ENCODE measurements at regions of chr15 and their contacts with region 1.

Region 1: GRCh38 chr15:85689729-85690128 is 105.0 kb downstream of the KLHL25 start:
- DNase-seq: peak; percentile 56
- H3K4me3 Mint-ChIP-seq: peak overlapping the region; percentile 96
- H3K27ac Mint-ChIP-seq: peak overlapping the region; percentile 100
- H3K4me1 Mint-ChIP-seq: peaks cover 73% of the 10 kb centered on the region
- H3K27me3 Mint-ChIP-seq: no peaks in the 10 kb centered on the region

Region 2: DNA sequence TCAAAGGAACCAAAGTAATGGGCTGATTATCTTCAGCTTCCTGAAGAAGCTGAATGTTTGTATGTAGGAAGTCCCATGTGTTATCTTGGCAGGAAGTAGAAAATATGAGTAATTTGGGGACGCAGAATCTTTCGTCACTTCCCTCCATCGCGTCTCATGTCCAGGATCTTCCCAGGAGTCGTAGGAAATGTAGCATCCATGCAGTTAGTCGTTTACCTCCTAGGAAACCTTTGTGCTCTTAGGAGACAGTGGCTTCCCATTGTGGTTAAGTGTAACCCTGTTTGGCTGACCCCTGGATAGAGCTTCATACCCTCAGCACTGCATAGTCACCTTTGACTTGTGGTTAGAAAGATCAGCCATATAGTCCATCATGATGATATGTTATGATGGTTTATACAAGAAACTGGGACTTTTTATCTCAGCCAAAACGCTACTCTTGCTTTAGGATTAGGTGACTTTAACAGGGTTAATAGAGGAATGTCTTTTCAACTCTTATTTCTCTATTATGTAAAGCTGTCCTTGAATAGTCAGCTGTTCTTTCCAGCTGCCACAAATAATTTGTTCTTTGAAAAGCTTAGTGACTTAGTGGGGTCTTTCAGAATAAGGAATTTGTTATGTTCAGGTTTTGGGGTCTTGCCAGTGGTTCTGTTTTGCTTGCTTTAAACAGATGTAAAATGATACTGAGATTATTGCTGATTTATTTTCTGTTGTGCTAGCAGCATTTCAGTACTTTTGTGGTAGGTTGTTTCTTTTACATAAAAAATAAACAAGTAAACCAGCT is 12.8 kb after region 1 on chr15:
- intact Hi-C with region 1: loop called (anchors 1 kb)
- DNase-seq: peak; percentile 29
- H3K4me3 Mint-ChIP-seq: peak overlapping the region; percentile 78
- H3K27ac Mint-ChIP-seq: peak overlapping the region; percentile 98
- H3K4me1 Mint-ChIP-seq: peaks cover 66% of the 10 kb centered on the region
- H3K27me3 Mint-ChIP-seq: no peaks in the 10 kb centered on the region

Region 3: DNA sequence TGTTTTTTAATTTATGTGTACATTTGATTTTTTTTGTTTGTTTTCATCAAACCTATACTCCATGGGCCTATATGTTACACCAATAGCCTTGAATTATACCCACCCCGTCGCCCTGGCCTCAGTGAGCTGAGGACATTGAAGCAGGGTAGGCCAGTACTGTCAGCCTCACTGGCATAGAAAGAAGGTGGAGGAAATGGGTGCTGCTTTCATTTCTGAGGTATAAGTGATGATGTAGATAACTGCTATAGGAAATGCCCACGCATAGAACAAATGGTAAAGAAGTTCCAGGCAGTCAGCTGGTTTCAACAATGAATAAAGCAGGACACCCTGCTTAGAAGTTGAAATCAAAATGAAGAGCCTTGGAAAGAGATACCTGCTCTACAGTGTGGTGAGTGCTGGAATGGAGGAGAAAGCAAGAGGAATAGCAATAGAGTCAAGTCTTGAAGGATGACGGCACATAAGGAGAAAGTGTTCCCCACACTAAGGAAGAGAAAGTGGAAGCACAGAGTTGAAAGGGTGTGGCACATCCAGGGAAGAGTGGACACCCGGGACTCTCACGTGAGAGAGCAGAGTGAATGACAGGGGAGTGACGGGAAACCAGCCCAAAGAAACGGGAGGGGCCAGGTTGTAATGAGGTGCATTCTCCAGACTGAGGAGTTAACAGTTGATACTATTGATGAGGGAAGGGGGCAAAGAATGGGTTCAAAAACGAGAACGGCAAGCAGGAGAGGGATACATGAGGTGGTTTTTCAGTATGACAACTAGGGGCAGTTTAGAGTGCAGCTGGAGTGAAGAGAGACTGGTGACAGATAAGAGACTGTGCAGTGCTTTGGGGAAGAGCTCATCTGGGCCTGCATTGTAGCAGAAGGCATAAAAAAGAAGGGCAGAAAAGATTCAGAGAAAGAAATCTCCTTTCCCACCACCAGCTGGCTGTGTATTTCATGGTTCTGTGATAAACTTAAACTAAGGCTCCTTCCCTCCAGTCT is 34.5 kb after region 1 on chr15:
- intact Hi-C with region 1: loop called (anchors 1 kb)
- DNase-seq: no peak
- H3K4me3 Mint-ChIP-seq: peak overlapping the region; percentile 72
- H3K27ac Mint-ChIP-seq: peak overlapping the region; percentile 90
- H3K4me1 Mint-ChIP-seq: peaks cover 47% of the 10 kb centered on the region
- H3K27me3 Mint-ChIP-seq: no peaks in the 10 kb centered on the region

Region 4: GRCh38 chr15:85825692-85826091 is 136.0 kb after region 1 on chr15:
- intact Hi-C with region 1: no loop called
- DNase-seq: no peak
- H3K4me3 Mint-ChIP-seq: no peak overlapping the region
- H3K27ac Mint-ChIP-seq: no peak overlapping the region
- H3K4me1 Mint-ChIP-seq: no peaks in the 10 kb centered on the region
- H3K27me3 Mint-ChIP-seq: peaks cover 5% of the 10 kb centered on the region

Measured in activated T-helper 1 cell treated with anti-CD3 and anti-CD28 coated beads, Interleukin-12 subunit alpha, Interleukin-12 subunit beta, Interleukin-2, Interleukin-4 antibody, amounts not matched to agents 30 ng/mL and 10 ng/mL and 1 ng/mL, durations not matched to agents 14 hours and 24 hours and 36 hours (primary cell).